HepG2 (cell line): ENCODE measurements at regions of chr7 and their contacts with region 1.

Region 1: DNA sequence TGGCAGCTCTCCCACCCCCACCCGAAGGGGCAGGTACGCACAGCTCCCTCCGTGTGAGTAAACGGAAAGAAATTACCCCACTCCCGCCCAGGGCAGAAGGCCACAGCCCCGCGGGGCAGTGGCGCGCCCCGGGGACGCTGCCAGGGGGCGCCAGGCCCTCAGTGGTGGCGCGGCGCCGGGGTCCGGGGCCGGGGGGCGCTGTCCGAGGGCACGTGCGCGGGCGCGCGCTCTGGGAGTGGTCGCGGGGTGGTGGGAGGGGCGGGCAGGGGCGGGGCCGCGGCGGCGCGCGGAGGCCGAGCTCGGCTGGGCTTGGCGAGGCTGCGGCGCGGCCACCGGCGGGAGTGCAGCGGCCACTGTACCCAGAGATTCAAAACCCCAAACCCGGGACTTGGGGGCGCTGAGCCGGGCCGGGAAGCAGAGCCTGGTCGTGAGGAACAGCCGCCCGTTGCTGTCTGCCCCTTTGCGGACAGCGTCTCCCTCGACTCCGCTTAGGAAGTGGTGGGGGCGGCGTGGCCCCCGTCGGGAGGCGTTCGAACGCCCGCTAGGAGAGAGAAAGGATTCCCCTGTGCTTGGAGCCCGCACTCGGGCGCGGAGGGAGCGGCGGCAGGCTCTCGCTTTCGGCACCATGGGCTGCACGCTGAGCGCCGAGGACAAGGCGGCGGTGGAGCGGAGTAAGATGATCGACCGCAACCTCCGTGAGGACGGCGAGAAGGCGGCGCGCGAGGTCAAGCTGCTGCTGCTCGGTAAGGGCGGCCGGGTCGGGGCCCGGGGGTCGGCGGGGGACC is at the start of gene GNAI1:
- DNase-seq: peak; percentile 27
- ATAC-seq: peak; percentile 84
- H3K4me3 ChIP-seq: peak within 1 kb of the TSS; percentile 82 to 91 (median 89)
- H3K27ac ChIP-seq: peak within 1 kb of the TSS; percentile 43
- H3K4me1 ChIP-seq: peaks cover 40% of the 10 kb centered on the region
- H3K27me3 ChIP-seq: no peaks in the 10 kb centered on the region; a peak in 1 of 5 replicates
- CTCF ChIP-seq: peak; percentile 45
- EP300 ChIP-seq: no peak
- POLR2A ChIP-seq: peak in 1 of 2 experiments; percentile 45; a peak in 1 of 4 replicates
- RAD21 ChIP-seq: peak; percentile 66
- total RNA-seq, gene GNAI1: 5.7 and 8.8 TPM in 2 replicates

Region 2: GRCh38 chr7:80060218-80060806 is 74.4 kb before region 1 on chr7:
- CTCF ChIA-PET with region 1: interaction called, 3 read pairs
- POLR2A ChIA-PET with region 1: no interaction called
- in situ Hi-C with region 1: no loop called
- intact Hi-C with region 1: loop called (anchors 2 kb)
- DNase-seq: peak; percentile 41
- ATAC-seq: no peak
- H3K4me3 ChIP-seq: no peak overlapping the region
- H3K27ac ChIP-seq: no peak overlapping the region
- H3K4me1 ChIP-seq: no peaks in the 10 kb centered on the region
- H3K27me3 ChIP-seq: no peaks in the 10 kb centered on the region
- CTCF ChIP-seq: peak; percentile 30; the same call in 1 of the 2 replicates
- EP300 ChIP-seq: no peak
- POLR2A ChIP-seq: no peak
- RAD21 ChIP-seq: no peak

Region 3: DNA sequence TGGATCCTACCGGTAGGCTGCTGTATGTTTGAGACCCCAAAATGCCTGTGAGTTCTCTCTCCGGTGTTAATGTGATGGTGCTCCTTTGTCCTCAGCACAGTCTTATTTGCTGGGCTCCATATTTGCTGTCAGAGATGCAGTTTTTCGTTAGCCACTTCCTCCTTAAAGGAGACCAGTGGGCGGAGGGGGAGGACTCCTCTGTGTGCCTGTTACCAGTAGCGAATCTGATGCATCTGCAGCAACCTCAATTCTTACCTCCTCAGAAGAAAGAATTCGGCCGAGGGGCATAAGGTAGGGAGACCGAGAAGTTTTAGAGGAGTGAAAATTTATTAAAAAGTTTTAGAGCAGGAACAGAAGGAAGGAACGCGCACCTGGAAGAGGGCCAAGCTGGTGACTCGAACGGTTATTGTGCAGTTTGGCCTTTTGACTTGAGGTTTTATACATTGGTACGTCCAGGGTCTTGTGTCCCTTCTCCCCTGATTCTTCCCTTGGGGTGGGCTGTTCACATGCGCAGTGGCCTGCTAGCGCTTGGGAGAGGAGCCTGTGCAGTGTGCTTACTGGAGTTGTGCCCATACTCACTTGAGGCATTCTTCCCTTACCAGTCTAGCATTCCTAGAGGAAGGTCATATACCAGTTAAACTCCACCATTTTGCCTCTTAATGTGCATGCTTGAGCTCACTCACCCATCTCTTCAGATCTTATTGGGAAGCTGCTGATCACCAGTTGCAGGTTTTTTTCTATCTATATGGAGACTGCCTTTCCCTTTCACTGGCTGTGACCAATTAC is 49.4 kb after region 1 on chr7:
- CTCF ChIA-PET with region 1: no interaction called
- POLR2A ChIA-PET with region 1: no interaction called
- in situ Hi-C with region 1: no loop called
- intact Hi-C with region 1: loop called (anchors 5 kb)
- DNase-seq: no peak
- ATAC-seq: no peak
- H3K4me3 ChIP-seq: no peak overlapping the region
- H3K27ac ChIP-seq: no peak overlapping the region
- H3K4me1 ChIP-seq: peaks cover 8% of the 10 kb centered on the region
- H3K27me3 ChIP-seq: no peaks in the 10 kb centered on the region
- CTCF ChIP-seq: no peak
- EP300 ChIP-seq: no peak
- POLR2A ChIP-seq: no peak
- RAD21 ChIP-seq: no peak

Region 4: DNA sequence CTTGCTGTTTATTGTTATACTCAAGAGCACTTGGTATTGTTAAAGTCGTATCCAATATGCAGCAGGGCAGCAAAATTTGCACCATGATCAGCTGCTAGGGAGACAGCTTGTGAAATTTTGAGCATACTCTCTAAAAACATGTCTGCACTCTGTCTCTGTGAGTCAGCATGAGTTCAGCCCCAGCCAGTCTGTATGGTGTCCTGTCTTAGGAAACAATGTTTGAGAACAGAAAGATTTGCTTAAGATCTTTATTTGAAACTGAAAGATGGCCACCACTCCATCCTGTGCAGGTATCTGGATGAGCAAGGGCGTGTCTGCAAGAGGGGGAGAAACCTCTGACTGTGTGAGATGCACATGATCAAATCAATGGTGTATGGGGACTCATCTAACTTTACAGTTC is 97.0 kb after region 1 on chr7:
- CTCF ChIA-PET with region 1: no interaction called
- POLR2A ChIA-PET with region 1: no interaction called
- in situ Hi-C with region 1: no loop called
- intact Hi-C with region 1: loop called (anchors 5 kb)
- DNase-seq: no peak
- ATAC-seq: no peak
- H3K4me3 ChIP-seq: no peak overlapping the region
- H3K27ac ChIP-seq: no peak overlapping the region
- H3K4me1 ChIP-seq: peaks cover 16% of the 10 kb centered on the region
- H3K27me3 ChIP-seq: no peaks in the 10 kb centered on the region
- CTCF ChIP-seq: no peak
- EP300 ChIP-seq: no peak
- POLR2A ChIP-seq: no peak
- RAD21 ChIP-seq: no peak

Region 5: DNA sequence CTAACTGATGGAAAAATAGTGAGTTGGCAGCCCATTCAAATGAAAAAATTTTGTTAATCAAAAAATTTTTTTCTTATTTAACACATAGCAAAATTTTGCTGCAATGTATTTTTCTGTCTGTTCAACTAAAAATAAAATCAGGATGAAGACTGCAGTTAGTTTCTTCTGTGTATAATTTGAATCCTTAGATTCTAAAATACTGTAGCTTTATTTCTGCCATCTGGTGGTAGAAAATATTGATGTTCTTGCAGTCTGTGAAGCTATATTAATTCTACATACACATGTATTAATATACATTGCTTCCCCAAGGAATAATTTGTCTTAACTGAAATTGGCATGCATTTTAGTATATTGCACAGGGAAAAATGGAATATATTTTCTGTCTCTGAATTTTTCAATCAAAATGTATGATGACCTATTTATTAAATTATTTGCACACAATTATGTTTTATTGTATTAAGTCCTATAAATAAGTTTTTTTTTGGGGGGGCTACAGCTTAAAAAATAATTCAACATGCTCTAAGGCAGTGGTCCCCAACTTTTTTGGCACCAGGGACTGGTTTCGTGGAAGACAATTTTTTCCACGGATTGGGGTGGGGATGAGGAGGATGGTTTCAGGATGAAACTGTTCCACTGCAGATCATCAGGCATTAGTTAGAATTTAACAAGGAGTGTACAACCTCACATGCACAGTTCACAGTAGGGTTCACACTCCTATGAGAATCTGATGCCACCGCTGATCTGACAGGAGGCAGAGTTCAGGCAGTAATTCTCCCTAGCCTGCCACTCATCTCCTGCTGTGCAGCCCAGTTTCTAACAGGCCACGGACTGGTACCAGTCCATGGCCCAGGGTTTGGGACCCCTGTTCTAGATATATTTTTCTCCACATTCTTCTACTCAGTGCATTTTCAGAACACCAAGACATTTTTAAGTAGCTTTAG is 257.8 kb after region 1 on chr7:
- CTCF ChIA-PET with region 1: interaction called, 15 read pairs
- POLR2A ChIA-PET with region 1: no interaction called
- in situ Hi-C with region 1: loop called (anchors 5 kb)
- intact Hi-C with region 1: loop called (anchors 1 kb)
- DNase-seq: peak; percentile 17
- ATAC-seq: peak; percentile 78
- H3K4me3 ChIP-seq: no peak overlapping the region
- H3K27ac ChIP-seq: no peak overlapping the region
- H3K4me1 ChIP-seq: peaks cover 18% of the 10 kb centered on the region
- H3K27me3 ChIP-seq: no peaks in the 10 kb centered on the region
- CTCF ChIP-seq: 0 out of 2 replicates have a peak, but pooled peaks have one; percentile 19
- EP300 ChIP-seq: no peak
- POLR2A ChIP-seq: no peak
- RAD21 ChIP-seq: no peak

Region 6: DNA sequence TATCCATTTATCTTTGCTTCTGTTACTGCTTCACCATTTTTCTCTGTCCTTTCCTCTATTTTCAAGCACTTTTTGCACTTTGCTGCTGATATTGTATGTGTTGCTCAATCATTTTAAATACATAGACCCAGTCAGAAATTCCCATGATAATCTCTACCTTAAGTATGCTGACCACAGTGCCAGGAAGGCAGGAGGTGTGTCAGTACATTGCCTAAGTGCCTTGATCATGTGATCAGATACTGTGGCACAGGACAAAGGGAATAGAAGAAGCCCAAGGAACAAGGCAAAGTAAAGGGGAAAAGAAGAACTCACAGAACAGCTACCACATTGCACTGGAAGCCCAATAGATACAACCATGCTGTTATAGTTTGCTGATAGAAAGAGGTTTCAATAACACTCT is 450.1 kb after region 1 on chr7:
- CTCF ChIA-PET with region 1: no interaction called
- POLR2A ChIA-PET with region 1: no interaction called
- in situ Hi-C with region 1: no loop called
- intact Hi-C with region 1: no loop called
- DNase-seq: peak; percentile 29
- ATAC-seq: no peak
- H3K4me3 ChIP-seq: no peak overlapping the region
- H3K27ac ChIP-seq: no peak overlapping the region
- H3K4me1 ChIP-seq: no peaks in the 10 kb centered on the region
- H3K27me3 ChIP-seq: no peaks in the 10 kb centered on the region
- CTCF ChIP-seq: no peak
- EP300 ChIP-seq: no peak
- POLR2A ChIP-seq: no peak
- RAD21 ChIP-seq: no peak

Region 7: GRCh38 chr7:80659120-80660055 is 524.7 kb after region 1 on chr7:
- CTCF ChIA-PET with region 1: no interaction called
- POLR2A ChIA-PET with region 1: no interaction called
- in situ Hi-C with region 1: no loop called
- intact Hi-C with region 1: loop called (anchors 10 kb)
- DNase-seq: peak; percentile 26
- ATAC-seq: no peak; the same call in 2 of the 3 replicates
- H3K4me3 ChIP-seq: no peak overlapping the region
- H3K27ac ChIP-seq: no peak overlapping the region
- H3K4me1 ChIP-seq: peaks cover 22% of the 10 kb centered on the region
- H3K27me3 ChIP-seq: no peaks in the 10 kb centered on the region
- CTCF ChIP-seq: peak; percentile 60
- EP300 ChIP-seq: no peak
- POLR2A ChIP-seq: no peak
- RAD21 ChIP-seq: no peak